GM23248 (cell line): ENCODE measurements at regions of chr6 and their contacts with region 1.

Region 1: DNA sequence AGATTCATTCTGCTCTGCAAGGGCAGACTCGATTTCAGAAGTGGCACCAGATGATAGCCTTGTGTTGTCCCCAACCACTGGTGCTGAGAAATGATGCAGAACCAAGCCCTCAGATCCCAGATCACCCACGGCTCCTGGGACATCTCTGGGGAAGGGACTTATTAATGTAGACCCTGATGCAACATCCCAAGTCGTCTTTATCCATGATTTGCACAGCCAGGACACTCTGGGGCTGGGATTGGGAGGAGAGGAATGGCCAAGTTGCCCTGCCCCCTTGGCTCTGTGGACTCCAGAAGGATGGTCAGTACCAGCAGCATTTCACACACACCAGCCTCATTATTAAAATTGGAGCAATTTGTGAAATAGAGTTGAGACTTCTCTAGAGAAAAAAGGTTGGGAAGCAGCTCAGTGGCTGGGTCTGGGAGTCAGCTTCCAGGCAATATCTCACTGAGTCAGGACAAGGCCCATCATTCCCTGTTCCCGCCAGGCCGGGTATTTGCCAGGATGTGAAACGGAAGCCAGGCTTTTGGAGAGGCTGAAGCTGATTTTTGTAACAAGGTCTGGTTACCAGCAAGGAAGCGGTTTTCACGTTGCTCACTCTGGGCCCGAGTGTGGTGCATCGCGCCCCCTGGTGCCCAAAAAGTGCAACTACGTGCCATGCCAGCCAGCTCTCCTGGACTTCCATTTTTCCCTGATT is 67.4 kb downstream of the ZBTB2 start:
- DNase-seq: peak; percentile 93
- H3K4me3 ChIP-seq: peak overlapping the region; percentile 33
- H3K27ac ChIP-seq: peak overlapping the region; percentile 53
- H3K4me1 ChIP-seq: peaks cover 13% of the 10 kb centered on the region; the same call in 1 of the 2 replicates
- H3K27me3 ChIP-seq: no peaks in the 10 kb centered on the region

Region 2: GRCh38 chr6:150417899-150418826 is 905.8 kb before region 1 on chr6:
- in situ Hi-C with region 1: loop called (anchors 25 kb)
- DNase-seq: peak; percentile 93
- H3K4me3 ChIP-seq: peak overlapping the region; percentile 64
- H3K27ac ChIP-seq: peak overlapping the region; percentile 63
- H3K4me1 ChIP-seq: peaks cover 7% of the 10 kb centered on the region
- H3K27me3 ChIP-seq: no peaks in the 10 kb centered on the region; the same call in 1 of the 2 replicates

Region 3: GRCh38 chr6:150567823-150568383 is 756.0 kb before region 1 on chr6:
- in situ Hi-C with region 1: no loop called
- DNase-seq: peak; percentile 32
- H3K4me3 ChIP-seq: no peak overlapping the region
- H3K27ac ChIP-seq: no peak overlapping the region
- H3K4me1 ChIP-seq: no peaks in the 10 kb centered on the region
- H3K27me3 ChIP-seq: peaks cover 32% of the 10 kb centered on the region

Region 4: GRCh38 chr6:150905769-150906506 is 418.0 kb before region 1 on chr6:
- in situ Hi-C with region 1: loop called (anchors 10 kb)
- DNase-seq: no peak
- H3K4me3 ChIP-seq: no peak overlapping the region
- H3K27ac ChIP-seq: no peak overlapping the region
- H3K4me1 ChIP-seq: peaks cover 23% of the 10 kb centered on the region
- H3K27me3 ChIP-seq: no peaks in the 10 kb centered on the region

Region 5: DNA sequence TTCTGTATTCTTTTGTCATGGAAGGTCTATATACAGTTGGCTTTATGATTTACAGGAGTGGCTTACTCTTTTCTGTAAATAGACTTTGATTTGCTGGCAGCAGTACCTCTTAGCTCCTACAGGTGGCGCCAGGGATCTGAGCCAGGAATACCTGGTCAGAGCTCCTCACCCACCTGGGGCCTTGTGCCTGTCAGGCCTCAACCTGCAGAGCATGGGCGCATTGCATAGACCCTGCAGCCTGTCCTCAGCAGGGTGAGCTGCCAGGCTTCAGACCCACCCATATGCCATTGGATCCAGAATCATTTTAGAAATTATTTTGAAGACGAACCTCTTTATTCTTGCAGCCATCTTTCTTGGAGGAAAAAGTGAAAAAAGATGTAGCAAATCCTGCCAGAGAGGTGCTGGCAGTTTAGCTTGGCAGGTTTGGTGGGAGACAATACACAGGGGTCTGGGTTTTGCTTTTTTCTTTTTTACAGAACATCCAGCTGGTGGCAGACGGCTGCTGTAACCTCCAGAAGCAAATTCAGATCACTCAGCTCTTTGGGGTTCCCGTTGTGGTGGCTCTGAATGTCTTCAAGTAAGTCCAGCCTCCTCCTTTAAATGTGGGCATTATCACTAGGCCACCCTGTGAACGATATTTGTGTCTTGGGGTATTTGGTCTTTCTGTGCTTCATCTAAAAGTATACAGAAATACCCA is 309.4 kb before region 1 on chr6:
- in situ Hi-C with region 1: loop called (anchors 10 kb)
- DNase-seq: peak; percentile 53
- H3K4me3 ChIP-seq: no peak overlapping the region
- H3K27ac ChIP-seq: no peak overlapping the region; the same call in 1 of the 2 replicates
- H3K4me1 ChIP-seq: no peaks in the 10 kb centered on the region; the same call in 1 of the 2 replicates
- H3K27me3 ChIP-seq: no peaks in the 10 kb centered on the region